A673 (cell line): ENCODE measurements at regions of chr11 and their contacts with region 1.

Region 1: DNA sequence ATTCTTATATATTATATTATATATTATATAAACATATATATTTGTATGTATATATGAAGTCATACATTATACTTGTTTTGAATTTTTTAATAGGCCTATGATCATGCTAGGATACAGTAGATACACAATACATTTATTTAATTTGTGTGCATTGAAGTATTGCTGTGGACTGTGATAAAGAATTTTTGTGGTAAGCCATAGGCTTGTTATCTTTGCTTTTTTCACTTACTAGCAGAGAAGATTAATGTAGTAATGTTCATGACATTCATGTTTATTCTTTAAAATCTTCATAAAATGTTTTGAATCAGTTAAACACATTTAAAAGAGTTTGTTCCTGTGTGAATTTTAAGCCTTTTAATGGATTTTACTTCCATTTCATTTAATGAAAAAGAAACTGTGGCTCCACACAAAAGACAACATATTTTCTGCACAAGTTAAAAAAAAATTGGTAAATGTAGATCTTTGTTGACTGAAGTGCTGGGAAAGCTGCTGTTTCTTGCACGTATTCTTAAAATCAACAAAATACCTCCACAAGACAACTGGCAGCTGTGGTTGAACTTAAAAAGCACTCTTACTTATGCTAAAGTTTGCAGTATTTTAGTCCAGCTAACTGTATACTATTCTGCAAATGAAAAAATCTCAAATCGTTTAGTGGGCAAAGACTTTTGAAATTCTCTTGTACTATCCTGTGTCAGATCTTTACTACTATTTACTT is 156.2 kb downstream of the TMEM135 start:
- DNase-seq: peak; percentile 41
- H3K4me3 ChIP-seq: no peak overlapping the region
- H3K27ac ChIP-seq: peak overlapping the region; percentile 99
- H3K4me1 ChIP-seq: peaks cover 85% of the 10 kb centered on the region
- H3K27me3 ChIP-seq: no peaks in the 10 kb centered on the region
- CTCF ChIP-seq: no peak

Region 2: DNA sequence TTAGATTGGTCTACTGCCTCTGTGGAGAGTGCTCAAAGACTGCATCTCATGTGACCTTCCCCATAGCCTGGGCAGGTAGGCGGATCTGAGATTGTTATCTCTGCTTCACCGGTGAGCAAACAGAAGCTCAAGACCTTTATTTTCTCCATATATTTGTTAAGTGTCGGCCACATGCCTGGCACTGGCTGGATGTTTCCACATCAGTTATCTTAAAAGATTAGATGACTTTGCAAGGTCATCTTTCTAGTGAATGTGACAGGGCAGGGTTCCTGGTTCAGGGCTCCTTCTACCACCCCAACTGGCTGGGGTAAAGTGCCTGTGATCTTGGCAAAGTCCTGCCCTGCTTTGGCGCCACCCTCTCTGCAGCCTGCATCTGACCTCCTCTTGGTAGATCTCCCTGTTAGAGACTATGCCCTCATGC is 694.2 kb before region 1 on chr11:
- CTCF ChIA-PET with region 1: no interaction called
- POLR2A ChIA-PET with region 1: no interaction called
- intact Hi-C with region 1: no loop called
- DNase-seq: no peak
- H3K4me3 ChIP-seq: no peak overlapping the region
- H3K27ac ChIP-seq: no peak overlapping the region
- H3K4me1 ChIP-seq: peaks cover 5% of the 10 kb centered on the region
- H3K27me3 ChIP-seq: no peaks in the 10 kb centered on the region
- CTCF ChIP-seq: no peak

Region 3: DNA sequence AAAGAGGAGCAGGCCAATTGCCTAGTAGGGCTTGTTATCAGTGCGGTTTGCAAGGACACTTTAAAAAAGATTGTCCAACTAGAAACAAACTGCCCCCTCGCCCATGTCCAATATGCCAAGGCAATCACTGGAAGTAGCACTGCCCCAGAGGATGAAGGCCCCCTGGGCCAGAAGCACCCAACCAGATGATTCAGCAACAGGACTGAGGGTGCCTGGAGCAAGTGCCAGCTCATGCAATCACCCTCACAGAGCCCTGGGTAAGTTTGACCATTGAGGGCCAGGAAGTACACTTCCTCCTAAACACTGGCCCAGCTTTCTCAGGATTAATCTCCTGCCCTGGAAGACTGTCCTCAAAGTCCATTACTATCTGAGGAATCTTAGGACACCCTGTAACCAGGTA is 345.1 kb before region 1 on chr11:
- CTCF ChIA-PET with region 1: no interaction called
- POLR2A ChIA-PET with region 1: no interaction called
- intact Hi-C with region 1: no loop called
- DNase-seq: no peak
- H3K4me3 ChIP-seq: no peak overlapping the region
- H3K27ac ChIP-seq: no peak overlapping the region
- H3K4me1 ChIP-seq: no peaks in the 10 kb centered on the region
- H3K27me3 ChIP-seq: no peaks in the 10 kb centered on the region
- CTCF ChIP-seq: no peak

Region 4: GRCh38 chr11:86869966-86870570 is 323.8 kb before region 1 on chr11:
- CTCF ChIA-PET with region 1: interaction called, 3 read pairs
- POLR2A ChIA-PET with region 1: no interaction called
- intact Hi-C with region 1: loop called (anchors 2 kb)
- DNase-seq: peak; percentile 87
- H3K4me3 ChIP-seq: no peak overlapping the region
- H3K27ac ChIP-seq: no peak overlapping the region
- H3K4me1 ChIP-seq: peaks cover 23% of the 10 kb centered on the region
- H3K27me3 ChIP-seq: no peaks in the 10 kb centered on the region
- CTCF ChIP-seq: peak; percentile 95

Region 5: DNA sequence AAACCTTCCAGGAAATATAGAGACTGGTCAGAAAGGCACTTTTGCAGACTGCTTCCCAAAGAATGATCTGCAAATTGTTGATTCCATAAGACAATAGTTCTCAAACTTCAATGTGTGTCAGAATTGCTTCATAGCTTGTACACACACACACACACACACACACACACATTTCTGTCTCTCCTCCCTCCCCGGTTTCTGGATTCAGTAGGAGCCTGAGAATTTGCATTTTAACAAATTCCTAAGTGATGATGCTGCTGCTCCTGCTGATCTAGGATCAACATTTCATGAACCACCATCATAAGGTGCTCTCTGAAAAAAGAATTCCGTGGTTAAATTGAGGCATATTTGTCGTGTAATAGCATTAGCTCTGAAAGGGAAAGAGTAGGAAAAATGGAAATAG is 203.4 kb before region 1 on chr11:
- CTCF ChIA-PET with region 1: interaction called, 7 read pairs
- POLR2A ChIA-PET with region 1: no interaction called
- intact Hi-C with region 1: loop called (anchors 5 kb)
- DNase-seq: peak; percentile 90
- H3K4me3 ChIP-seq: peak overlapping the region; percentile 25
- H3K27ac ChIP-seq: peak overlapping the region; percentile 88
- H3K4me1 ChIP-seq: peaks cover 81% of the 10 kb centered on the region
- H3K27me3 ChIP-seq: no peaks in the 10 kb centered on the region
- CTCF ChIP-seq: no peak

Region 6: GRCh38 chr11:87203907-87204602 is 10.1 kb after region 1 on chr11:
- CTCF ChIA-PET with region 1: no interaction called
- POLR2A ChIA-PET with region 1: no interaction called
- intact Hi-C with region 1: no loop called
- DNase-seq: no peak
- H3K4me3 ChIP-seq: no peak overlapping the region
- H3K27ac ChIP-seq: no peak overlapping the region
- H3K4me1 ChIP-seq: peaks cover 27% of the 10 kb centered on the region
- H3K27me3 ChIP-seq: no peaks in the 10 kb centered on the region
- CTCF ChIP-seq: no peak

Region 7: GRCh38 chr11:87259736-87260135 is 65.8 kb after region 1 on chr11:
- CTCF ChIA-PET with region 1: no interaction called
- POLR2A ChIA-PET with region 1: no interaction called
- intact Hi-C with region 1: loop called (anchors 5 kb)
- DNase-seq: peak; percentile 60
- H3K4me3 ChIP-seq: no peak overlapping the region
- H3K27ac ChIP-seq: peak overlapping the region; percentile 55
- H3K4me1 ChIP-seq: peaks cover 64% of the 10 kb centered on the region
- H3K27me3 ChIP-seq: no peaks in the 10 kb centered on the region
- CTCF ChIP-seq: no peak

Region 8: DNA sequence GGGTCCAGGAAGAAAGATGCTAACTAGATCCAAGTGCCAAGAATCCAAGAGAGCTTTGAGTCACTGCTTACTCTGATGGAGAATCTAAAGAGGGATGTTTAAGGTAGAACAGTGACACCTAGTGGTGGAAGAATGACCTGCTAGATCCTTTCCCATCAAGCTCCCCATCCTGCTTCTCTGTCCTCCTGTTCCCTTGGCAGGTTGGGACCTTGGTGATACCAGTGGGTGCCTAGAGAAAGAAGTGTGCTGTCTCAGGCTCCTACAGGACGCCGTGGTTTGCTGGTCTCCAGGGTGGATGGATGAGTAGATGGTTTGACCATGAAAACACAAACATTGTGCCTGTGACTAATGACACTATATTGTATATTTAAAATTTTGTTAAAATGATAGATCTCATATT is 227.5 kb after region 1 on chr11:
- CTCF ChIA-PET with region 1: no interaction called
- POLR2A ChIA-PET with region 1: no interaction called
- intact Hi-C with region 1: loop called (anchors 10 kb)
- DNase-seq: peak; percentile 90
- H3K4me3 ChIP-seq: no peak overlapping the region
- H3K27ac ChIP-seq: no peak overlapping the region
- H3K4me1 ChIP-seq: no peaks in the 10 kb centered on the region
- H3K27me3 ChIP-seq: no peaks in the 10 kb centered on the region
- CTCF ChIP-seq: peak; percentile 80

Region 9: GRCh38 chr11:87518266-87518665 is 324.4 kb after region 1 on chr11:
- CTCF ChIA-PET with region 1: no interaction called
- POLR2A ChIA-PET with region 1: no interaction called
- intact Hi-C with region 1: no loop called
- DNase-seq: no peak
- H3K4me3 ChIP-seq: no peak overlapping the region
- H3K27ac ChIP-seq: no peak overlapping the region
- H3K4me1 ChIP-seq: no peaks in the 10 kb centered on the region
- H3K27me3 ChIP-seq: peaks cover 32% of the 10 kb centered on the region
- CTCF ChIP-seq: no peak